A673 (cell line): ENCODE measurements at regions of chr13 and their contacts with region 1.

Region 1: DNA sequence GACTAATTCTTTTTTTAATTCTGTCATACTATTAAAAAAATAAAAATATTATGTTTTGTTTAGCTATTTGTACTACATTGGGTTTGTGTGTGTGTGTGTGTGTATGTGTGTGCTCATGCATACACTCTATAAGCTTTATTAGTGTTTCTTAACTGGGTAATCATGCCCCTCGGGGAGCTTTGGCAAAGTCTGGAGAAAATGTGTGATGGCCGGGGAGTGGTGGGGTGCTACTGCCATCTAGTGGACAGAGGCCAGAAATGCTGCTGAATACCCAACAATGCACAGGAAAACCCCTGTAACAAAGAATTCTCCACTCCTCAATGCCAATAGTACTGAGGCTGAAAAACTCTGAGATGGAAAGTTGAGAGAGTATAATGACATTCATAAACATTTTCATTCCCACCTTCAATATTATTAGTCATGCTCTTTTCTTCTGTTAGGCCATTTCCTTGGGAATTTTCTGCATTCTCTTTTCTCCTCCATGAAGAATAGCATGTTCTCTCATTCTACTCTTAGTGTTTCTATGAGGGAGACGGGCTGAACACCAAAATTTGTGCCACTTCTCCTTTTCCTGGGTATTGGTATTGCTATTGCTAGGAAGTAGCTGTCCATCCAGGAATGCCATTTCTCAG is 157.3 kb downstream of the DNAJC3 start:
- DNase-seq: peak; percentile 87
- H3K4me3 ChIP-seq: no peak overlapping the region
- H3K27ac ChIP-seq: no peak overlapping the region
- H3K4me1 ChIP-seq: peaks cover 8% of the 10 kb centered on the region
- H3K27me3 ChIP-seq: no peaks in the 10 kb centered on the region
- CTCF ChIP-seq: peak; percentile 83

Region 2: GRCh38 chr13:95191821-95192563 is 642.3 kb before region 1 on chr13:
- CTCF ChIA-PET with region 1: interaction called, 4 read pairs
- POLR2A ChIA-PET with region 1: no interaction called
- intact Hi-C with region 1: loop called (anchors 5 kb)
- DNase-seq: peak; percentile 91
- H3K4me3 ChIP-seq: no peak overlapping the region
- H3K27ac ChIP-seq: peak overlapping the region; percentile 60
- H3K4me1 ChIP-seq: peaks cover 29% of the 10 kb centered on the region
- H3K27me3 ChIP-seq: no peaks in the 10 kb centered on the region
- CTCF ChIP-seq: peak; percentile 96

Region 3: DNA sequence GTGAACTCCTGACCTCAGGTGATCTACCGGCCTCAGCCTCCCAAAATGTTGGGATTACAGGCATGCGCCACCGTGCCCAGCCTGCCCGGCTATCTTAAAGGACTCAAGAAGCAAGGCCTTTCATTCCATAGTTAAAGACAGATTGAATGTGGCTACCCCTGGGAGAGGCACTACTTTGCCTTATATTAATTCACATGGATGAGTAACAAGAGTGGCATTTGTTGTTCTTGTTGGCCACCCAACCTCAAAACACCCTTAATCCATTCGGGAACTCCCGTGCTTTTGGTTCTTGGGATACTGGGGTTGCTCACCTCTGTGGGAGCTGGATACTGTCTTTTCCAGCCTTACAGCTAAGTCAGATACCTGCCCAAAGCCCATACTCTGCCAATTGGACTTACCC is 498.6 kb before region 1 on chr13:
- CTCF ChIA-PET with region 1: no interaction called
- POLR2A ChIA-PET with region 1: no interaction called
- intact Hi-C with region 1: no loop called
- DNase-seq: no peak
- H3K4me3 ChIP-seq: no peak overlapping the region
- H3K27ac ChIP-seq: no peak overlapping the region
- H3K4me1 ChIP-seq: no peaks in the 10 kb centered on the region
- H3K27me3 ChIP-seq: no peaks in the 10 kb centered on the region
- CTCF ChIP-seq: no peak

Region 4: GRCh38 chr13:95494082-95494681 is 340.1 kb before region 1 on chr13:
- CTCF ChIA-PET with region 1: interaction called, 4 read pairs
- POLR2A ChIA-PET with region 1: no interaction called
- intact Hi-C with region 1: loop called (anchors 5 kb)
- DNase-seq: peak; percentile 65
- H3K4me3 ChIP-seq: no peak overlapping the region
- H3K27ac ChIP-seq: no peak overlapping the region
- H3K4me1 ChIP-seq: no peaks in the 10 kb centered on the region
- H3K27me3 ChIP-seq: no peaks in the 10 kb centered on the region
- CTCF ChIP-seq: peak; percentile 79

Region 5: GRCh38 chr13:95516499-95516898 is 317.8 kb before region 1 on chr13:
- CTCF ChIA-PET with region 1: interaction called, 12 read pairs
- POLR2A ChIA-PET with region 1: no interaction called
- intact Hi-C with region 1: no loop called
- DNase-seq: no peak
- H3K4me3 ChIP-seq: no peak overlapping the region
- H3K27ac ChIP-seq: no peak overlapping the region
- H3K4me1 ChIP-seq: no peaks in the 10 kb centered on the region
- H3K27me3 ChIP-seq: no peaks in the 10 kb centered on the region
- CTCF ChIP-seq: no peak

Region 6: DNA sequence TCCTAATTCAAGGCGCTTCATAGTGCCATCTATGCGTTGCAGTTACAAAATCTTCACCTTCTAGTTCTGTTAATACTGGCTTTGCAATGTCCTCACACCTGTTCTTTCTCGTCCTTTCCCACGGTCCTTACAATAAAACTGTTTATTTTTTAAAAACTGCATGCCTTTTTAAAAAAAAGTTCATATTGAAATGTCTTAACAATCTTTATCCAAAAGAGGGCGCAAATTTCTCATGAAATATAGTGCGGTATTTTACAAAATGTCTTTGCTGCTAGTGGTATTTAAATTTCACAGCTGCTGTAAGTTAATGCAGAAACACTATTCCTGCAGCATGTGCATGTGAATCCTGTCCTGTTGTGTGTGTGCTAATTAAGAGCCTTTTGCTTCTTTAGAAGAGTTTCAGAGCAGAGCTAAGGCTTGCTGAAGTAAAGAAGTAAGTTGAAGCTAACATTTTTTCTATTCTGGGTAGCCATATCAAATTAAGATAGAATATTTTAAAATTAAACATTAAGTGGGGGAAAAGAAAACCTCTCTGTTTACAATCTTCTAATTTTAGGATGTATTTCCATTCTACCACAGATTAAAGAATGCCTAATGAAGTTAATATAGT is 297.5 kb before region 1 on chr13:
- CTCF ChIA-PET with region 1: interaction called, 19 read pairs
- POLR2A ChIA-PET with region 1: no interaction called
- intact Hi-C with region 1: loop called (anchors 2 kb)
- DNase-seq: peak; percentile 59
- H3K4me3 ChIP-seq: no peak overlapping the region
- H3K27ac ChIP-seq: no peak overlapping the region
- H3K4me1 ChIP-seq: no peaks in the 10 kb centered on the region
- H3K27me3 ChIP-seq: no peaks in the 10 kb centered on the region
- CTCF ChIP-seq: peak; percentile 64

Region 7: DNA sequence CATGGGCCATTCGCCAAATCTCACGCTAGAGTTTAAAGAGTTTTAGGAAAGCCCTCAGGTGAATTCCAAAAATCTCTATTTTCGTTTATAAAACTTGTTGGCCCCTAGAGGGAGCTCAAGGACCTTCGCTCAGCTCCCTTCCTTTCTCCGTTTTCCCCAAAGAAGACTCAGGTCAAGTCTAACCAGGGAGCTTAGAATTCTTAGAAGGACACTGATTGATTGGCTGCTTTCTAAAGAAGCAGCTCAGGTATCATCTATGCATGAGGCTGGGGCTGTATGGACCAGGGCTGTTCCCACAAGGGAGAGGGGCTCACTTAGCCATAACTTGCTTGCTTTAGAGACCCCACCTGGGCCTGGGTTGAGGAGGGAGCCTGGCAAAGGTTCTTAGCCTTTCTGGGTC is 210.2 kb before region 1 on chr13:
- CTCF ChIA-PET with region 1: interaction called, 38 read pairs
- POLR2A ChIA-PET with region 1: interaction called, 3 read pairs
- intact Hi-C with region 1: loop called (anchors 1 kb)
- DNase-seq: peak; percentile 68
- H3K4me3 ChIP-seq: no peak overlapping the region
- H3K27ac ChIP-seq: no peak overlapping the region
- H3K4me1 ChIP-seq: no peaks in the 10 kb centered on the region
- H3K27me3 ChIP-seq: no peaks in the 10 kb centered on the region
- CTCF ChIP-seq: peak; percentile 67